ENCODE measurements at regions of chr19 and their contacts with region 1.

Region 1: DNA sequence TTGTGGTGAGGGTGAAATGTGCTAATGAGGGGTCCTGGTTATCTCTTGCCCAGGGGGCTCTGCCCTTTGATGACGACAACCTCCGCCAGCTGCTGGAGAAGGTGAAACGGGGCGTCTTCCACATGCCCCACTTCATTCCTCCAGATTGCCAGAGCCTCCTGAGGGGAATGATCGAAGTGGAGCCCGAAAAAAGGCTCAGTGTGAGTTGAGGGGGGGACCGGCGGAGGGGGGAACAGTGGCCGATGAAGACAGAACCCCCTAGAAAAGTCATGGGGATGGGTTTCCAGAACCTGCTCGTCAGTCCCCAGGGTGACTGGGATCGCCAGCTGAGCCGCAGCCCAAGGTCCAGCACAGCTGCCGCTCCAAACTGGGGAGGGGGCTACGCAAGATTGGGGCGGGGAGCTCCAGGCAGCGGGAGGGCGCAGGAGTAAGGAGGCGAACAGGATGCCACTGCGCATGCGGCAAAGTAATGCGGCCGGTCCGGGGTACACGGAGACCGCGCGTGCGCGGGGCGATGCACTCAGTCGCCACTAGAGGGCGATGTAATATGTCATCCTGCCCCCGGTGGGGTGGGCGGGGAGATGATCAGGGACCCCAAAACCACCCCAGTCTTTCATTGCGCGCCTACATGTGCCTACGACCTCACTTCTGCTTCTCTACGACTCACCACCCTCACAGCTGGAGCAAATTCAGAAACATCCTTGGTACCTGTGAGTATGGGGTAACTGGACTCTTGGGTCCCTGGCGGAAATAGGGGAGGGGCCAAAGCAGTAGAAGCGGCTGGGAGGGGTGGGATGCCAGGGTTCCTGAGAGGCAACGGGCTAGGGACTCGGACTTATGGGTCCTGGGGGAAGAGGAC is 17.9 kb downstream of the BRSK1 start:
- DNase-seq: no peak
- H3K4me3 ChIP-seq: peak overlapping the region; percentile 23; the same call in 1 of the 2 replicates
- CTCF ChIP-seq: peak; percentile 77

Region 2: DNA sequence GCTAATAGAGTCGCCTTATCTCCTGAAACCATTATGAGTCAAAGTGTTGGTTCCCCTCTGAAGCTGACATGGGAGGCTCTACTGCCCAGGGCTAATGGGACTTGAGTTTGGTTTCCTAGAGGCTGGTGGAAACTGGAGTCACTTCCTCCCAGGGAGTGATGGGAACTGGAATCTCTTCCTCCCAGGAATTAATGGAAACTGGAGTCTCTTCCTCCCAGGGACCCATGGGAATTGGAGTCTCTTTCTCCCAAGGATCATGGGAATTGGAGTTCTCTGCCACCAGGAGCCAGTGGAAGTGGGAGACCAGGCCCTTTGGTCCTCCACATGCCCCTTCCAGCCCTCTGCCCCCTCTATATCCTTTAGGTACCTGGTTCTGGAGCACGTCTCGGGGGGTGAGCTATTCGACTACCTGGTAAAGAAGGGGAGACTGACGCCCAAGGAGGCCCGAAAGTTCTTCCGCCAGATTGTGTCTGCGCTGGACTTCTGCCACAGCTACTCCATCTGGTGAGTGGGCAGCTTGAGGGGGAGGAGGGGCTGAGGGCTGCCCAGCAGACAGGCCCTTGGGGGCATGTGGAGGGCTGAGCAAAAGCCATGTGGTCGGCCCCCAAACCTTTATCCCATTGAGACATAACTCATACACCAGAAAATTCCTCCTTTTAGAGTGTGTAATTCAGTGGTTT is 12.4 kb before region 1 on chr19:
- CTCF ChIA-PET with region 1: interaction called, 127 read pairs
- POLR2A ChIA-PET with region 1: no interaction called
- DNase-seq: no peak
- H3K4me3 ChIP-seq: no peak overlapping the region
- CTCF ChIP-seq: no peak

Region 3: DNA sequence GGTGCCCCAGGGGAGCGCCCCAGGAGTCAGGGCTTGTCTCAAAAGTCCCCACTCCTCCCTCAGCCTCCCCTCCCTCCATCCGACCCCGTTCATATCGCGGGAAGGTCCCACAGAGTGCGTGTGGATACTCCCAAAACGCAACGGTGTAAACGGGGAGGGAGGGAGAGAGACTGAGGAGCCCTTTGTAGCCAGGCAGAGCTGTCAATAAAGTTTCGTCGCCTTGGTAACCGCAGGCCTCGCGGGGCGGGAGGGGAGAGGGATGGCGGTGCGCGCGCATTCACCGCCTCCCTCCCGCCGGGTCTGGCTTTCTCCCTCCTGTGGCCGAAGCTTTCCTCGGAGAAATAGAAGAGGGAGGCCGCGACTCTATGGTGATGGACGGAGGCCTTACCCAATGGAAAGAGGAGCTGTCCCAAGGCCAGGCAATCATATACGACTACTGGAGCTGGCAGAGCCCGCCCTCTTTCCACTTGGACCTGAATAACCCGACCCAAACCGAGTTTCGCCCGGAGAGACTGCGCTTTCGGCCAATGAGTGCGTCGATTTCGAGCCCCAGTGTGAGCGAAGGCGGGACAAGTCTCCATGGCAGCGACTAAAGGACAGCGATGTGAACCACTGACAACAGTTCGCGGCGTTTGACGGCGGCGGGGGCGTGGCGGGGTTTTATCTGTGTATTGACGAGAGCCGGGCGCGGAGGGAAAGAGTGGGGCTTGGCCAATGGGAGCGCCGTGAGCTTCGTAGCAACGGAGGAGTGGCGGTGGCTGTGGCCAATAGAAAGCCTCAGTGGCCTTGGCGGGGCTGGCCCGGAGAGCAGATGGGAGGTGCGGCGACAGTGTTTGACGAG is 37.6 kb after region 1 on chr19 and contains the start of gene KMT5C:
- CTCF ChIA-PET with region 1: interaction called, 27 read pairs
- POLR2A ChIA-PET with region 1: interaction called, 3 read pairs
- DNase-seq: peak; percentile 100
- H3K4me3 ChIP-seq: peak within 1 kb of the TSS; percentile 74
- CTCF ChIP-seq: peak; percentile 47

Region 4: GRCh38 chr19:55385740-55386529 is 84.2 kb after region 1 on chr19 and contains the start of gene RPL28:
- CTCF ChIA-PET with region 1: interaction called, 50 read pairs
- POLR2A ChIA-PET with region 1: interaction called, 3 read pairs
- DNase-seq: peak; percentile 74
- H3K4me3 ChIP-seq: peak within 1 kb of the TSS; percentile 97
- CTCF ChIP-seq: no peak

Region 5: DNA sequence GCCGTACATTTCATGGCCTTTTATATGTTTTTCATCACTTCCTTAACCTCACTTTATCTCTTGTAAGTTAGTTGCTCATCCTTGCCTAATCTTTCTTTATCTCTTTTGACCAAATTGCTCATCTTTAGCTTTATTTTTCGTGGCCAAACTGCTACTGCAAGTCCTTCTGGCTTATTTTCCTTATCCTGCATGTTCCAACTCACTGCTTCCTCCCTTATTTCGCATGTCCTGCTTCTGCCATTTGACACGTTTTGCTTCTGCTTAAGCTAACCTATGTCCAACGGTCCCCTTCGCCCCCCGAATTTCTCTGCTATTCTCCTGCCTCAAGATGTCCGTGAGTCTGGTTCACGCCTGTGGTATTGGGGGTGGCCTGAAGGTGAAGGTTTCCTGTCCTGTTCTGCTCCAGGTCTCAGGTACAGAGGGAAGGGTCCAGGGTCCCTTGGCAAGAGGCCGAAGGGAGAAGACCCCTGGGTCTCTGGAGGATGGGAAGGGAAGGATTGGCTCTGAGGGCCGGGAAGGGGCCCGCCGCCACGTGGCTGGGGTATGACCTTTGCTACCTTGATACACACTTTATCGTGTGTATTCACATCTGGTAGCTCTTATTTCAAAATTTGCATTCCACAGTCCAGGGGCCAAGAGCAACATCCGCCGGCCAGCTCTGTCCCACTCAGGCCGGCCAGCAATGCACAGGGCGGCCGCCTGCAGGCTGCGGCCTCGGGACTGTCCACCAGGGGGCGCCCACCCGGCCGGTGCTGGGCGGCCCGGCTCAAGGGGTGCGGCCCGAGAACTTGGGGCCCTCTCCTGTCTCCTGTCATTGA is 165.8 kb after region 1 on chr19:
- CTCF ChIA-PET with region 1: interaction called, 10 read pairs
- POLR2A ChIA-PET with region 1: no interaction called
- DNase-seq: no peak
- H3K4me3 ChIP-seq: no peak overlapping the region
- CTCF ChIP-seq: peak; percentile 96

Measured in AG04449 (cell line).